ENCODE measurements at regions of chr12 and their contacts with region 1.

Region 1: DNA sequence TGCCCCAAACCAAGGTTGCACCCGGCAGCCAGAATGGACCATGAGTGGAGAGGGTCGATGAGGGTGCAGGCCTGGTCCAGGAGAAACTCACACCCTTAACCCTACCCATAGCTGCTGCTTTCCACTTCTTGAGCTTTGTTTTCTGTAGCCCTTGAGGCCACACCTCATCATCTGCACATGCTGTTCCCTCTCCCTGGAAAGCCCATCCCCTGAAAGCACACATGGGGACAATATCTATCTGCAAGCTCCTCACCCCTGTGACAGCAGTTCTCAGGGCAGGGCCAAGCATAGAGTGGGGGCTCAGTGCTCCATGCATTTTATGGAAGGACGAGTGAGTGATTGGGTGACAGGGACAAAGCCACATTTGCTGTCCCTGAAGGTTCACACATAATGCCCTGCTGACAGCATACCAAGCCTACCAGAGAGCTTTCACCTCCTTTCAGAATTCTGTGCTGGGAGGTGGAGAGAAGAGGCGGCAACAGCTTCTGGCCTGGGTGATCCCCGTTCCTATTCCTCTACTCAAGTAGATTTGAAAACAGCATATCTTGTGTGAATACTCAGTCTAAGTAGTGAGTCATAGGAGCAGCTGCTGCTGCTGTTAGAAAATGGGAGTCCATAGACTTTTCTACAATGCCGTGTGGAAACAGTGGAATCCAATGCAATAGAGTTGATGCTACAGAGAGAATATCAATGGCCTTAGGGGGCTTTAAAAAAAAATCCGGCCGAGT is 44.6 kb downstream of the SRGAP1 start:
- DNase-seq: no peak
- ATAC-seq: peak; percentile 27
- H3K4me3 ChIP-seq: no peak overlapping the region
- H3K27ac ChIP-seq: peak overlapping the region; percentile 39
- H3K4me1 ChIP-seq: peaks cover 46% of the 10 kb centered on the region
- H3K27me3 ChIP-seq: no peaks in the 10 kb centered on the region
- CTCF ChIP-seq: no peak
- EP300 ChIP-seq: no peak
- POLR2A ChIP-seq: no peak
- RAD21 ChIP-seq: no peak

Region 2: GRCh38 chr12:62552906-62553556 is 1336.0 kb before region 1 on chr12:
- CTCF ChIA-PET with region 1: no interaction called
- POLR2A ChIA-PET with region 1: no interaction called
- in situ Hi-C with region 1: no loop called
- intact Hi-C with region 1: no loop called
- DNase-seq: no peak
- ATAC-seq: no peak
- H3K4me3 ChIP-seq: no peak overlapping the region
- H3K27ac ChIP-seq: no peak overlapping the region
- H3K4me1 ChIP-seq: no peaks in the 10 kb centered on the region
- H3K27me3 ChIP-seq: no peaks in the 10 kb centered on the region
- CTCF ChIP-seq: no peak
- EP300 ChIP-seq: no peak
- POLR2A ChIP-seq: no peak
- RAD21 ChIP-seq: no peak

Region 3: GRCh38 chr12:63862214-63863107 is 26.6 kb before region 1 on chr12:
- CTCF ChIA-PET with region 1: no interaction called
- POLR2A ChIA-PET with region 1: interaction called, 11 read pairs
- in situ Hi-C with region 1: no loop called
- intact Hi-C with region 1: no loop called
- DNase-seq: peak; percentile 83
- ATAC-seq: peak; percentile 86
- H3K4me3 ChIP-seq: peak overlapping the region in 1 of 3 experiments; percentile 1; a peak in 1 of 6 replicates
- H3K27ac ChIP-seq: peak overlapping the region; percentile 10
- H3K4me1 ChIP-seq: peaks cover 39% of the 10 kb centered on the region
- H3K27me3 ChIP-seq: no peaks in the 10 kb centered on the region
- CTCF ChIP-seq: no peak
- EP300 ChIP-seq: no peak
- POLR2A ChIP-seq: no peak
- RAD21 ChIP-seq: no peak

Region 4: DNA sequence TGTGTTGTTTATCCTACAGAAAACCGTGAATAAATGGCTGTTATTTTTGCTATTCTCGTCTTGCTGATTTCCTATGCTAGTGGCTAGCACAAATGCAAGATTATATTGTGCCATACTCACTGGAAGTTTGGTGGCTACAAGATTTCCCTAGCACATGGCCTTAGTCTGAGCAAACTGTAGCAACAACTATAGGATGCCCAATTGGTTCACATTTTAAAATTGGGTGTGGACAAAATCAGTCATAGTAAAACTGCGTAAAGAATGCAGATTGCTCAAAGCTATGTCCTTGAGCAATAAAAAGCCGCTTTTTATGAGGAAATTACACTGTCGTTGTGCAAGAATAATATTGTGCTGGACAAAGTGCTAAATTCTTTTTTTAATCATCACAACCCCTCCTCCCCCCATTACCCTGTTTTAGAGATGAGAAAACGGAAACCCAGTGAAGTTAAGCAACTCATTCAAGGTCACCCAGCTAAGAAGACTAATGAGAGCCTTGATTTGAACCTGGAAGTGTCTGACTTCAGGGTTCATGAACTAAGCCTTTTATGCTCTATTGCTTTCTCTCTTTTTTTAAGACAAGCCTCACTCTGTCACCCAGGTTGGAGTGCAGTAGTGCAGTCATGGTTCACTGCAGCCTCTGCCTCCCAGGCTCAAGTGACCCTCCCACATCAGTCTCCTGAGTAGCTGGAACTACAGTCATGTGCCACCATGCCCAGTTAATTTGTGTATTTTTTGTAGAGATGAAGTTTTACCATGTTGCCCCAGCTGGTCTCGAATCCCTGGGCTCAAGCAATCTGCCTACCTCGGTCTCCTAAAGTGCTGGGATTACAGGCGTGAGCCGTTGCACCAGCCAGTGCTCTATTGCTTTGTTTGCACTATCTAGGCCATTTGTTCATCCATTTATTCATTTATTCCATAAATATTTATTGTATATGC is 29.1 kb after region 1 on chr12:
- CTCF ChIA-PET with region 1: no interaction called
- POLR2A ChIA-PET with region 1: interaction called, 10 read pairs
- in situ Hi-C with region 1: no loop called
- intact Hi-C with region 1: no loop called
- DNase-seq: peak; percentile 92
- ATAC-seq: peak; percentile 86
- H3K4me3 ChIP-seq: peak overlapping the region; percentile 46 to 58 (median 57); a peak in 5 of 6 replicates
- H3K27ac ChIP-seq: peak overlapping the region; percentile 70
- H3K4me1 ChIP-seq: peaks cover 59% of the 10 kb centered on the region
- H3K27me3 ChIP-seq: no peaks in the 10 kb centered on the region
- CTCF ChIP-seq: no peak
- EP300 ChIP-seq: peak; percentile 82 to 86
- POLR2A ChIP-seq: no peak
- RAD21 ChIP-seq: no peak